Heart right ventricle (tissue), 16 donors: ENCODE measurements at regions of chr15 and their contacts with region 1.

Region 1: DNA sequence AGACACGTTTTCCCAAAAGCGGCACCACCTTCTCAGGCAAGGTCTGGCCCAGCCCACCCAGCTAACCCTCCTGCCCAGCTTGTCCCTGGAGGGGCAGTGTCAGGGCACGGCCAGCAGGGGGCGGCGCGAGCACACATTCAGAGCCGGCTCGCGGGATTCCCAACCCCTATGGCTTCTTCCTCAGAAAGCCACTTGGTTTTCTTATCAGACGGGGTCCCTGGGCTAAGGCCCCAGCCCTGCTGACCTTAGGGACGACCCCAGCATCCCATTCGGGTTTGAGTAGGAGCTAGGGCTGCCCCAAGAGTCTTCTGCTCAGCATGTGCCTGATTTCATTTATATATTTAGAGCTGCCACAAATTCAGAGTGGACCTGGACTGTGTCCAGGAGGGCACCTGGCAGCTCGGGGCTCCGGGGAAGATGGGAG is 14.5 kb downstream of the RLBP1 start:
- DNase-seq: peak; percentile 63 to 75
- ATAC-seq: peak; percentile 52 to 92 (median 82)
- H3K4me3 ChIP-seq: peak overlapping the region in 4 of 10 donors; percentile 5 to 25 (median 18)
- H3K27ac ChIP-seq: no peak overlapping the region
- H3K4me1 ChIP-seq: peaks cover 0 to 8% (median 7%) of the 10 kb centered on the region in 9 donors
- H3K27me3 ChIP-seq: no peaks in the 10 kb centered on the region
- CTCF ChIP-seq: peak; percentile 92 to 99 (median 98)

Region 2: GRCh38 chr15:89243691-89244471 is 37.0 kb after region 1 on chr15 and contains the start of gene FANCI:
- intact Hi-C with region 1: loop called in 1 of 10 experiments (anchors 5 kb)
- DNase-seq: peak; percentile 94 to 96
- ATAC-seq: peak; percentile 98 to 100 (median 99)
- H3K4me3 ChIP-seq: peak within 1 kb of the TSS; percentile 30 to 87 (median 73)
- H3K27ac ChIP-seq: peak within 1 kb of the TSS in 9 of 10 donors; percentile 2 to 82 (median 34)
- H3K4me1 ChIP-seq: peaks cover 4 to 23% (median 14%) of the 10 kb centered on the region in 9 donors
- H3K27me3 ChIP-seq: no peaks in the 10 kb centered on the region
- CTCF ChIP-seq: peak in 8 of 9 donors; percentile 26 to 73 (median 58)
- total RNA-seq, gene FANCI: 1.6 to 9.9 (median 2.7) TPM

Region 3: GRCh38 chr15:89299896-89300295 is 93.0 kb after region 1 on chr15:
- intact Hi-C with region 1: loop called in 7 of 10 experiments (anchors 2 to 10 kb)
- DNase-seq: no peak
- ATAC-seq: peak in 1 of 8 donors; percentile 53
- H3K4me3 ChIP-seq: no peak overlapping the region
- H3K27ac ChIP-seq: no peak overlapping the region
- H3K4me1 ChIP-seq: no peaks in the 10 kb centered on the region
- H3K27me3 ChIP-seq: no peaks in the 10 kb centered on the region
- CTCF ChIP-seq: peak in 6 of 9 donors; percentile 17 to 51 (median 41)

Region 4: GRCh38 chr15:89383365-89384175 is 176.7 kb after region 1 on chr15:
- intact Hi-C with region 1: no loop called
- DNase-seq: peak; percentile 56
- ATAC-seq: no peak
- H3K4me3 ChIP-seq: no peak overlapping the region
- H3K27ac ChIP-seq: no peak overlapping the region
- H3K4me1 ChIP-seq: peaks cover 2 to 16% (median 9%) of the 10 kb centered on the region in 9 donors
- H3K27me3 ChIP-seq: peaks cover 13 to 86% (median 62%) of the 10 kb centered on the region in 7 donors
- CTCF ChIP-seq: no peak

Region 5: GRCh38 chr15:89430530-89431341 is 223.8 kb after region 1 on chr15:
- intact Hi-C with region 1: loop called in 4 of 10 experiments (anchors 5 to 10 kb)
- DNase-seq: peak; percentile 87 to 88
- ATAC-seq: peak; percentile 89 to 97 (median 93)
- H3K4me3 ChIP-seq: peak overlapping the region in 9 of 10 donors; percentile 16 to 59 (median 51)
- H3K27ac ChIP-seq: peak overlapping the region in 1 of 10 donors; percentile 16
- H3K4me1 ChIP-seq: peaks cover 0 to 16% (median 7%) of the 10 kb centered on the region in 9 donors
- H3K27me3 ChIP-seq: peaks cover 0 to 46% (median 21%) of the 10 kb centered on the region in 7 donors
- CTCF ChIP-seq: peak; percentile 97 to 99 (median 99)